ENCODE measurements at regions of chr1 and their contacts with region 1.

Region 1: DNA sequence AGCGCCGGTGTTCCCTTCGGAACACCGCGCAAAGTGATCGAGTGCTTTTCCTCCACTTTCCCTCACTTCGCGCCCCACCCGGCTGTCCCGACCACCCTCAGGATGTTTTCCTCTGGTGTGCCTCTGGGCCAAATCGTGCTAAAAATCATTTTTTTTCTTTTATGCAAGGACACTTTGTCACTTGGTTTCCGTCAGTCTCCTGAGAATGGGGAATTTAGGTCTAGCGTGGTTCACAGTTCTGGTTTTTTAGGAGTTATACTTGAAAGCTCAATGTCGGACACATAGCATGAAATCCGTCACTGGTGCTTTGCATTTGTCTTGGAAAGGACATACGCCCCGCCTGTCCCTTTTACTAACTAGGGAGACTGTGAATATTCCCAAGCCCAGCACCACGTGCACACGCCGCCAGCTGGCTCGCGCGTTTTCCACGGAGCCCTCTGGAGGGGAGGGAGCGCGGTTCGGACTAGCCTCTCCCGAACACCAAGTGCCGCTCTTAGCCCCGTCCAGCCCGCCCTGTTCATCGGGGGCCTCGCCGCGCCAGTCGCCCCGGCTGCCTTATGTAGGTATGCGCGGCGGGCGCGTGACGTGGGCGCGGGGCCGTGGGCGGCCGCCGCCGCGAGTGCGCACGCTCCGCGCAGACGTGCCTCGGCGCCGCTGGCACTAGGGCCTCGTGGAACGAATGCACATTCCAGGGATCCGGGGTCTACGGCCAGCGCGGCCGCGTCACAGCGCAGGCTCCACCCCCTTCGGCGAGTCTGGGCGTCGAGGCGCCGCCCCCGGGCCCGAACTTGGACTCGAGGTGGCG is 572 bp upstream of the IRF2BP2 start:
- DNase-seq: peak; percentile 97
- ATAC-seq: peak; percentile 76

Region 2: DNA sequence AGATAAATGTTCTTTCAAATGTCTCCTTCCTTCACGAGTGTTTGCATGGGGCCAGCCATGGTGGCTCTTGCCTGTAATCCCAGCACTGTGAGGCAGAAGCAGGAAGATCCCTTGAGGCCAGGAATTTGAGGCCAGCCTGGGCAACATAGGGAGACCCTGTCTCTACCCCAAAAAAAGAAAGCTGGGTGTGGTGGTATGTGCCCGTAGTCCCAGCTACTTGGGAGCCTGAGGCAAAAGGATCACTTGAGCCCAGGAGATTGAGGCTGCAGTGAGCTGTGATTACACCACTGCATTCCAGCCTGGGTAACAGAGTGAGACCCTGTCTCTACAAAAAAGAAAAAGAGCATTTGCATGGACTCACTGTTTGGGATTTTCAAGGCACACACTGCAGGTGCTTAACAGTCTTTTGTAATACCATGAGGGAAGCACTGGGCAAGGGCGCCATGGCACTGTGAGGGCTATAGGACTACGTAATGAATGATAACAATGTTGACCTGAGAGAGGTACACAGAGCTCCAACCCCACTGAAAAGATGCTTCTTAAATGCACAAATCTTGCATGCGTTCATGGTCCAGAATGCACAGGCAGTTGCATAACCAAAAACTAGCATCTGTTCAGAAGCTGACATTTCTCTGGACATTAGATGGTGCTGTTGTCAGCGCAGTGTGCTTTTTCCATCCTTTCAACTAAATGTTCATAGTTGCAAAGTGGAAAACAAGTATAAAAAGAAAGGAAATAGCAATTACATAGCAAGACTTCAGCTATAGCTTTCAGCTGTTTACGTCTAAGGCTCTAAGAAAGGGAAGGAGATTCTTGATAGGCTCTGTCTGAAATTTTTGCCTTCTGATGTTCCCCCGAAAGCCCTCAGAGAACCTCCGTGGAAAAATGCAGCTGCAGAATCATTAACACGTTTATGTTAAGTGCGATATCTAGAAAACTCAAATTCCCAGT is 123.8 kb before region 1 on chr1:
- intact Hi-C with region 1: no loop called
- DNase-seq: no peak
- ATAC-seq: peak; percentile 87

Region 3: GRCh38 chr1:234499119-234499942 is 111.2 kb before region 1 on chr1:
- intact Hi-C with region 1: loop called (anchors 1 kb)
- DNase-seq: peak; percentile 97
- ATAC-seq: peak; percentile 97

Region 4: DNA sequence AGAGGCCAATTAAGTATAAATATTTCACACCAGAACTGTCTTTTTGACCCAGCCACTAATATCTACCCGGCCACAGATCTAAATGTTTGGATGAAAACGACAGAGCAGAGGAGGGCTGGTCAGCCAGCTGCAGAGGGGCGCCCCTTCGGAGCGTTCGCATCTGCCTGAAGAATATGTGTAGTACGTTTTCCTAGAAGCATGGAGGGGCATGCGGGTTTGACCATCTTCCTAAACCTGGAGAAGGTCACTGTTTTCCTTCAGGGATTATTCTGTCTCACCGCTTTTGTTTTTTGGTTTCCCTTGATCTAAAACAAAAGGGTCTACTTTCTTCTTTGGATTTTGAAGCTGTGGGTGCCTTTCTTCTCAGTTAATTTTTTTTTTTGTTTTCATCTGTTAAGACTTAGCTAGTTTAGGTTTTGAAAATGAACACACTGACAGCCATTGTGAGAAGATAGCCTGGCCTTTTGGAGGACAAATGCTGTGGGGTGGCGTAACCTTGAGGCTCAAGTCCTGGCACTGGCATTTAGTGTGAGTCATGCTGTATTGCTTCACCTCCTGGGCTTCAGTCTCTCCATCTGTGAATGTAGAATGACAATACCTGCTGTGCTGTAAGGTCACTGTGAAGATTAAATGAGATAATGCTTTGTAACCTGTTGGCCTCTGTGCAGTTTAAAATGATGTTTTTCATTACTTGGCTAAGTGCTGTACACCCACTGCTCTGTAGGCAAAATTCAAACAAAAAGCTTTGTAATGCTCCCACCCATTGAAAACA is 73.5 kb after region 1 on chr1:
- intact Hi-C with region 1: loop called (anchors 5 kb)
- DNase-seq: peak; percentile 67
- ATAC-seq: peak; percentile 97

Region 5: DNA sequence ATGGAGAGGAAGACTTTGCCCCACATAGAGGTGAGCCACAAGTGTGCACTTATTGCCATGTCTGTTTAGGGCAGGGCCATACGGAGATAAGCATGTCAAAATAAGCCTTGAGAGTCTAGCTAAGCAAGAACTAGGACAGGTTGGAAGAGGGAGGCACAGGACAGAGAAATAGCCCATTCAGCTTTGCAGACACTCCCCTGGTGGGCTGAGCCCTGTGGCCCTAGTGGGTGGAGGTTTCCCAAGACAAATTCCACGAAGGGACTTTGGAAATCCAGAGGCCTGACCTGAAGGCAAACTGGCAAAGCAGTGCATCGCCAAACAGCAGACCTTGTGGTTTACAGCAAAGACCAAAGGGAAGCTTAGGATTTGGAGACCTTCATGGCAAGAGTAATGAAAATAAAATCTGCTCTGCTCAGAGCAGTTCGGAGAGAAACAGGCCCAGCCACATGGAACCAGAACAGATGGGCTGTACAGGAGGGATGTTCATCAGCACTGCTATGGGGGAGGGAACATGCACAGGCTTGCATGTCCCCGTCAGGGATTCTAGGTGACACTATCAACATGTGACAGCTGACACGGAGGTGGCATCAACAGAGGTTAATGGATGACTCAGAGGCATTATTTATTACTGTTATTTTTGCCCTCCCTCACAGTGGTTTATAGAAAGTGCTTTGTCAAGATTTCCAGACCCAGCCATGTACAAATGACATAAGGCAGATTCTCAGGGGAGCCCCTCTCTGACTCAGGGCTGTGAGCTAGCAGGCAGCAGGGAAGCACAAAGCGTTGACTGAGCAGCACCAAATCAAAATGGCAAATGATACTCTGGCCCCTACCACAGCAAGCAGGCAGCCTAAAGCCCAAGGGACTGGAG is 89.5 kb after region 1 on chr1:
- intact Hi-C with region 1: loop called (anchors 5 kb)
- DNase-seq: no peak
- ATAC-seq: no peak

Region 6: GRCh38 chr1:234758851-234759250 is 148.3 kb after region 1 on chr1:
- intact Hi-C with region 1: no loop called
- DNase-seq: no peak
- ATAC-seq: no peak

Region 7: GRCh38 chr1:234887016-234887900 is 276.7 kb after region 1 on chr1:
- intact Hi-C with region 1: loop called (anchors 2 kb)
- DNase-seq: peak; percentile 82
- ATAC-seq: peak; percentile 76

Region 8: DNA sequence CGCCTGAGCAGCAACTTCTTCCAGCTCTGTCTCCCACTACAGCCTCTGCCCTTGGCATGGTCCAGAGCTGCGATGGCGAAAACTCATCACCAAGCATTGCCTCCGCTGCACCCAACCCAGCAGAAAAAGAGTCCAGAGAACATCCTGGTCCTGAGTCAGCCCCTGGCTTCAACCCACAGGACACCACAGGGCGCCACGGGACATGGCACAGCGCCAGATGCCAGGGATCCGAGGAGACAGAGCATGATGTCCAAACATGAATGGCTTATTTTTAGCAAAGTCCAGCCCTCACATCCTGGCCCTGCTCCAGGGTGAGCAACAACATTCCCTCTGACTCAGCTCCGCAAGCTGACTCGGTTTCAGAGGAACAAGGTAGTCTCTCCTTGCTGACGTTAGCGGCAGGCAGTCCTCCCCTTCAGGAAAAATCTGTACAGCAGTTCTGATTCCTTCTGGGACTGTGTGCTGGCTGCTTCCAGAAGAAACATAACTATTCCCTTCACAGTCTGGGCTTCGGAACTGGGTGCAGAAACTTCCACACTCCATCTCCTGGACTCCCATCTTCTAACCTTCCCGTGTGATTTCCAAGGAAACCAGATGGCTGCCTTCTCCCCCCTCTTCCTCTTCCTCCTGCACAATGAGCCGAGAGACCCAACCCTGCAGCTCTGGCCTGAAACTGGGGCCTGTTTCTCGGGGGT is 386.8 kb after region 1 on chr1:
- intact Hi-C with region 1: loop called (anchors 5 kb)
- DNase-seq: peak; percentile 97
- ATAC-seq: peak; percentile 93